ENCODE measurements at regions of chr16 and their contacts with region 1.

Region 1: GRCh38 chr16:57091975-57092785 is at the start of gene CPNE2:
- DNase-seq: peak in 5 of 7 donors; percentile 37 to 61 (median 42)
- H3K4me3 ChIP-seq: peak within 1 kb of the TSS in 2 of 4 donors; percentile 62 to 95
- H3K27ac ChIP-seq: peak within 1 kb of the TSS in 4 of 5 donors; percentile 43 to 78 (median 64)
- H3K4me1 ChIP-seq: peaks cover 14 to 19% of the 10 kb centered on the region in 2 donors
- H3K27me3 ChIP-seq: no peaks in the 10 kb centered on the region
- CTCF ChIP-seq: no peak
- POLR2A ChIP-seq: peak in 1 of 2 donors; percentile 28
- total RNA-seq, gene CPNE2: 11.8 to 43.6 (median 16.6) TPM

Region 2: GRCh38 chr16:57013229-57013628 is 79.0 kb before region 1 on chr16:
- intact Hi-C with region 1: no loop called
- DNase-seq: no peak
- H3K4me3 ChIP-seq: no peak overlapping the region
- H3K27ac ChIP-seq: no peak overlapping the region
- H3K4me1 ChIP-seq: peaks cover 0 to 3% of the 10 kb centered on the region in 2 donors
- H3K27me3 ChIP-seq: no peaks in the 10 kb centered on the region
- CTCF ChIP-seq: no peak
- POLR2A ChIP-seq: no peak

Region 3: DNA sequence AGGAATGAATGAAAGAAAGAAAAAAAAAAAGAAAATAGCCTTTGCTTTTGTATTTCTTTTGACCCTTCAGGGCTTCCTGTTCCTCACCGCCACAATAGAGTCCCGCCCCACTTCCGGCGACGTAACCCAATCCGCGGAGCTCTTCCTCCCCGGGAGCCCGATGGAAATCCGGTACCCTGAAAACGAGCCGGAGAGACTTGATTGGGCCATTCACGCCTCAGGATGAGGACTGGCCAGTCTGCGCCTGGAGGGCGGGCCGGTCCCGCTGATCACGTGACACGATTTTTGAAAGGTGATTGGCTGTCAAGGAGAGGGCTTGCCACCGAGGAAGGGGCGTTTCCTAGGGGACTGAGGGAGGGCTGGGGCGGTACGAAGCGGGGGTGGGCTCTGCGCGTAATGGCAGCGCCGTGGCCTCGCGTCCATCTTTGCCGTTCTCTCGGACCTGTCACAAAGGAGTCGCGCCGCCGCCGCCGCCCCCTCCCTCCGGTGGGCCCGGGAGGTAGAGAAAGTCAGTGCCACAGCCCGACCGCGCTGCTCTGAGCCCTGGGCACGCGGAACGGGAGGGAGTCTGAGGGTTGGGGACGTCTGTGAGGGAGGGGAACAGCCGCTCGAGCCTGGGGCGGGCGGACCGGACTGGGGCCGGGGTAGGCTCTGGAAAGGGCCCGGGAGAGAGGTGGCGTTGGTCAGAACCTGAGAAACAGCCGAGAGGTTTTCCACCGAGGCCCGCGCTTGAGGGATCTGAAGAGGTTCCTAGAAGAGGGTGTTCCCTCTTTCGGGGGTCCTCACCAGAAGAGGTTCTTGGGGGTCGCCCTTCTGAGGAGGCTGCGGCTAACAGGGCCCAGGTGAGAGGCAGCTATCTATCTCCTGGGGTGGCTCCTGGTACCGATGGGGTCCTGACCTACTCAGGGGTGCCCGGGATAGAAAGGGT is 94.0 kb after region 1 on chr16 and contains the starts of genes PSME3IP1 and RSPRY1:
- intact Hi-C with region 1: no loop called
- DNase-seq: peak; percentile 99 to 100 (median 99)
- H3K4me3 ChIP-seq: peak within 1 kb of the TSS; percentile 77 to 98 (median 90)
- H3K27ac ChIP-seq: peak within 1 kb of the TSS; percentile 84 to 98 (median 91)
- H3K4me1 ChIP-seq: peaks cover 9 to 27% of the 10 kb centered on the region in 2 donors
- H3K27me3 ChIP-seq: no peaks in the 10 kb centered on the region
- CTCF ChIP-seq: no peak
- POLR2A ChIP-seq: peak; percentile 50 to 85
- total RNA-seq, gene PSME3IP1: 32.9 to 75.0 (median 66.5) TPM
- total RNA-seq, gene RSPRY1: 17.3 to 40.2 (median 25.6) TPM

Region 4: DNA sequence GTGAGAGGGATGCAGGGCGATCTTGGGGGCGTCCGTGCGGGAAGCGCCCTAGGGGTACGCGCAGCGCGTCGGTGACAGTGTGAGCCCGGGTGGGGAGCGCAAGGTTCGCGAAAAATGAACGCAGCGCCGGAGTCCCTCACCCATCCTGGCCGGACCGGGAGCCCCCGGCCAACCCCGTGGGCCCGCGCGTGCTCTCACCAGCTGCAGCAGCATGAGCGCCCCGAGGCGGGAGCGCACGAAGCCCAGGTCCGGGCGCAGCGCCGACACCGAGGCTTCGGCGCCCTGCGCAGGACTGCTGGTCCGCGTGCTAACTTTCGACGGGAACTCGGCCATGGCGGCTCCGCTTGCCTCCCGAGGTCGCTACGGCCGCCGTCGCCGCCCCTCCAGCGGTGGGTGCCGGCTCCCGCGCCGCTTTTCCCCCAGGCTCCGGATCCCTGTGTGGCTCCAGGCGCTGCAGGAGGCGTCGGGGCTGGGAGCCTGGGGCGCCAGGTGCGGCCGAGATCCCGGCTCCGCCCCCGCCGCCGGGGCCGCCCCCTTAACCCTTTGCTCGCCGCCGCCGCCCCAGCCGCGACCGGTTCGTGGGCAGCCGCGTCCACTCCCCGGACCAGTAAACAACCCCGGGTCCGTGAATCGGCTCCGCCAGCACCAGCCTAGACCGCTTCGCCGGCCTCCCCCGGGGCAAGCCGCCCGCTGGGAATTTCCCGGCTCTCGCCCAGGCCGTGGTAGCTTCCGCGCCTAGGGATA is 192.2 kb after region 1 on chr16 and contains the start of gene PLLP:
- intact Hi-C with region 1: loop called in 1 of 2 experiments (anchors 10 kb)
- DNase-seq: peak in 4 of 7 donors; percentile 33 to 42 (median 39)
- H3K4me3 ChIP-seq: peak within 1 kb of the TSS in 2 of 4 donors; percentile 33 to 48
- H3K27ac ChIP-seq: no peak within 1 kb of the TSS
- H3K4me1 ChIP-seq: peaks cover 16 to 18% of the 10 kb centered on the region in 2 donors
- H3K27me3 ChIP-seq: no peaks in the 10 kb centered on the region
- CTCF ChIP-seq: no peak
- POLR2A ChIP-seq: no peak
- total RNA-seq, gene PLLP: 1.0 to 10.0 (median 2.7) TPM